Adrenal gland (tissue), 19 donors: ENCODE measurements at regions of chr19 and their contacts with region 1.

Region 1: DNA sequence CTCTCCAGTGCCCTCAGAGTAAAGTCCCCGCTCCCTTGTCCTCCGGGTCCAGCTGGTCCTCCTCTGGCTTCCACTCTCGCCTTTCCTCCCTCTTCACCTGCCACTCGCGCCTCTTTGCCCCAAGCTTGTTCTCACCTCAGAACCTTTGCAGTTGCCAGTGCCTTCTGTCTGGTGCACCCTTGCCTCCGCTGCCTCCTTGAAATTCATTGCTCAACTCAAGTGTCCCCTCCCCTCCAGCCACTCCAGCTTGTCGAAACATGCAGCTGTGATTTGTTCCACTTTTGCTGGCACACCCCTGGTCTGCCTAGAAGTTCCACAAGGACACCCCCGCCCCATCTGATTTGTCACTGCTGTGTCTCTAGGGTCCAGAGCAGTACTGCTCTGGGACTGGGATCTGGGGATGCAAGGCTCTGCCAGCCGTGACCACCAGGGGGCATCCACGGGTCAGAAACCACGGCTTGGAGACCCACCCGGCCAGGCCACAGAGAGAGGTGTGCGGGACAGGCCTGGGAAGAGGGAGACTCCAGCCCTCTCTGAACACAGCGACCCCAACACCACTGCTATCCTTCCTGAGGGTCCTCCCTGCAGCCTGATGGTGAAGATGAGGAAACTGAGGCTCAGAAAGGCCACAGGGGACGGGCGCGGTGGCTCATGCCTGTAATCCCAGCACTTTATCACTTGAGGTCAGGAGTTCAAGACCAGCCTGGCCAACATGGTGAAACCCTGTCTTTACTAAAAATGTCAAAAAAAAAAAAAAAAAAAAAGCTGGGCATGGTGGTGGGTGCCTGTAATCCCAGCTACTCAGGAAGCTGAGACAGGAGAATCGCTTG is 49.9 kb downstream of the AP1M1 start:
- DNase-seq: peak; percentile 82 to 94 (median 86)
- H3K4me3 ChIP-seq: no peak overlapping the region
- H3K27ac ChIP-seq: no peak overlapping the region
- H3K4me1 ChIP-seq: no peaks in the 10 kb centered on the region
- H3K27me3 ChIP-seq: no peaks in the 10 kb centered on the region
- CTCF ChIP-seq: peak; percentile 89 to 98 (median 95)
- POLR2A ChIP-seq: no peak

Region 2: DNA sequence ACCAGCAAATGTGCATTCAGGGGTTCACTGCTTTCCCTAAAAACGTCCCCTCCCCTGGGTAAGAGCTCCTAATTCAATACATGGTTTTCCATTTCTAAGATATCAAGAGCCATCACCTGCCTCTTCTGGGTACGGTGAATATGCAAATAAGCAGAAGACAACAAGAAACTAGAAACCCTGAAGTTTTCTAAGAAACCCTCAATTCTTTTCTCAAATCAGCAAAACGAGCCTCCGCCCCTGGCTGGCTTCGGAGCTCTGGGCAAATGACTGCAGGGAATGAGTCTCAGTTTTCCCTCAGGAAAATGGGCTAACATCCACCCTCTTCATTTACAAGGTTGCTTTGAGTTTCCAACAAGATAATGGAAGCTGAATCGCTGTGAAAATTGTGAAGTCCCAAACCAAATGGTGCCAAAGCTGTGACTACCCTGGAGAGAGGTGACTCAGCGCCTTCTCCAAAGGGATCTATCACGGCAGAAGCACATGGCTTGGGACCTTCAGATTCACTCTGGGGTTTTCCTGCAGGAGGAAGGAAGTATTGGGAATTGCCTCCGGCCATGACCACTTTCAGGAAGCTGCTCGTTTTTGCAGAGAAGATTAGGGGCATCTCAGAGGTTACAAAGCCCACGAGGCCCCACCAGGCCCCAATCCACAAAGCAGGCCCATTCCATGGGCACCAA is 103.7 kb after region 1 on chr19:
- intact Hi-C with region 1: no loop called
- DNase-seq: peak in 1 of 7 donors; percentile 36
- H3K4me3 ChIP-seq: no peak overlapping the region
- H3K27ac ChIP-seq: no peak overlapping the region
- H3K4me1 ChIP-seq: no peaks in the 10 kb centered on the region
- H3K27me3 ChIP-seq: no peaks in the 10 kb centered on the region
- CTCF ChIP-seq: no peak
- POLR2A ChIP-seq: no peak

Region 3: DNA sequence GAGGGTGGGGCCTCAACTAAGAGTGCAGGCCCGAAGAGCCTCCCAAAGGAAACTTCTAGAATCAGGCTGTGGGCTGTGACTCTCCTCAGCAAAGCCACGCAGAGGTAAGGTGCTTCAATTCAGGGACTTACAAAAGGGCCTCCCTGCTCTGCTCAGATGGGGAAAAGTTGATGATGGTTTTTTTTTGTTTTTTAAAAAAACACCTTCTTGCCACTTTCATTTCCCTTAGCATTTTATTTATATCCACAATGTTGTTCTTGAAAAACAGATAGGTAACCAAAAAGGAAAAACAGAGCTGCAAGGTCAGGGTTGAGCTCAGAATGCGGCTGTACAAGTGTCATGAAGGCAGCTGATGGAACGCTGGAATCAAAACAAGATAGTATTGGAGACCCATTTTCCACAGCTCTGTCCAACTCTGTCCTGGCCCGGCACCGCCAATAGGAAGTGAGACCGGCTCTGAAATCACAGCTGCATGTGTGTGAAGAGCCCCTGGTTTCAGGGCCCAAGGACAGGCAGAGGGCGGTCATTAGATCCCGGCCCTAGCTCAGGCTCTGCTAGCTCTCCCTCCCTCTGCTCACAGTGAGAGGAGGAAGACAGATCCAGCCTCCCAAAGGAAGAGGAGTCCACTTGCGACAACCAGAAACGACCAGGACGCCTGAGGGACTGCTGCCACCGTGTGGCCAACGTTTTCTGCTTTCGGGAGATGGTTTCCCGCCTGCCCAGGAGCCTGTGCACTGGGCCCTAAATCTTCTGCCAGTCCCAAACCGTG is 135.4 kb after region 1 on chr19:
- intact Hi-C with region 1: loop called (anchors 2 to 5 kb)
- DNase-seq: peak; percentile 85 to 94 (median 89)
- H3K4me3 ChIP-seq: no peak overlapping the region
- H3K27ac ChIP-seq: peak overlapping the region in 4 of 5 donors; percentile 41 to 80 (median 62)
- H3K4me1 ChIP-seq: peaks cover 0 to 15% of the 10 kb centered on the region in 2 donors
- H3K27me3 ChIP-seq: no peaks in the 10 kb centered on the region
- CTCF ChIP-seq: peak; percentile 74 to 92 (median 90)
- POLR2A ChIP-seq: no peak